ENCODE measurements at regions of chr17 and their contacts with region 1.

Region 1: DNA sequence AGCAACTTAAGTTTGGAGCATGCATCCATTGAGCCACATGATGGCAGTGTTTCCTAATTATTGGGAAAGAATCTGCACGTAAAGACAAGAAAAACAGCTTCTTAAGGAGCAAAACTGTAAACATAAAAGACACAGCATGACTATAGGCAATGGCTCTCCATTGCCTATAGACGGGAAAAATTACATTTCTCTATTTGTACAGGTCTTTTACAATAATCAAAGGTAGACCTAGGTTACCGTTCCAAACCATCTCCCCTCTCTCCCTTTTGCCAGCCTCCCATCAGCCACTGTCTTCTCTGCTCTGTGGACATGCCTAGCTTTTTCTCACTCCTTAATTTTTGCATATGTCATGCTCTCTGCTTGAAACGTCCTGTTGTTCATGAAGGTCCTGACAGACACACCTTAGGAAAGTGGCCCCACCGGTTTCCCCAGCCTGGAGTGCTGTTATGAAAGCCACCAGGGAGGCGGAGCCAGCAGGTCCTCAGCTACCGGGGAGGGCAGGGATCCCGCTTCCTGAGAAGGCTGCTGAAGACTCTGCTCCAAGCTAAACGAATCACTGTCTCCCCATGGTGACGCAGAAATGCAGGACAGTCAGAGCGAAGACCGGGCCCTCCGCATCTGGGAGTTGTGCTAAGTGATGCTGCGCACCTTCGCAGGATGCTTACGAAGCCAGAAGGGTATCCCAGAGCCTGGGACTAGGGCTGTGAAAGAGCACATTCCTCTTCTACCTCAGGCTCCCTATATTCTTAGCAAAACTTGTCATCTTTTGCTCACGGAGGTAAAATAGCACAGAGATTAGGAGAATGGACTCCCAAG is 2.2 kb upstream of the SLC16A11 start:
- DNase-seq: no peak

Region 2: GRCh38 chr17:7035591-7036368 is 10.3 kb before region 1 on chr17 and contains the start of gene SLC16A13:
- CTCF ChIA-PET with region 1: interaction called, 10 read pairs
- POLR2A ChIA-PET with region 1: interaction called, 33 read pairs
- DNase-seq: peak; percentile 94

Region 3: GRCh38 chr17:7136266-7136877 is 90.3 kb after region 1 on chr17:
- CTCF ChIA-PET with region 1: interaction called, 16 read pairs
- POLR2A ChIA-PET with region 1: interaction called, 4 read pairs
- DNase-seq: peak; percentile 59

Region 4: DNA sequence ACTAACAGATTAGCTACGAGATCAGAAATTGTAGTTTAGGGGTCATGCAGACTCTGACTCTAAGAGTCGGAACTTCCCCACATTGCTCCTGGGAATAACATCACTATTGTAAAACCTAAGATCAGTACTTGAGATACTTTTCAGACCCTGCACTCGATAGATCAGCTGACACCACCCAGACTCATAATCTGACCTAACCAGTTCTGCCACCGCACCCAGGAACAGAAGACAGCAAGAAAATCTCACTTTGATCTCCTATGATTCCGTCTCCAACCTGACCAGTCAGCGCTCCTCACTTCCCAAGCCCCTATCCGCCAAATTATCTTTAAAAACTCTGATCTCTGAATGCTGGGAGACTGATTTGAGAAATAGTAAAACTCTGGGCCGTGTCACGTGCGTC is 95.7 kb after region 1 on chr17:
- CTCF ChIA-PET with region 1: interaction called, 16 read pairs
- POLR2A ChIA-PET with region 1: interaction called, 4 read pairs
- DNase-seq: no peak

Region 5: GRCh38 chr17:7177196-7177953 is 131.3 kb after region 1 on chr17:
- CTCF ChIA-PET with region 1: interaction called, 25 read pairs
- POLR2A ChIA-PET with region 1: interaction called, 26 read pairs
- DNase-seq: peak; percentile 89

Region 6: GRCh38 chr17:7219812-7220581 is 173.9 kb after region 1 on chr17 and contains the starts of genes ACADVL and DLG4:
- CTCF ChIA-PET with region 1: interaction called, 5 read pairs
- POLR2A ChIA-PET with region 1: interaction called, 13 read pairs
- DNase-seq: peak; percentile 71